SK-N-SH (cell line): ENCODE measurements at regions of chr4 and their contacts with region 1.

Region 1: DNA sequence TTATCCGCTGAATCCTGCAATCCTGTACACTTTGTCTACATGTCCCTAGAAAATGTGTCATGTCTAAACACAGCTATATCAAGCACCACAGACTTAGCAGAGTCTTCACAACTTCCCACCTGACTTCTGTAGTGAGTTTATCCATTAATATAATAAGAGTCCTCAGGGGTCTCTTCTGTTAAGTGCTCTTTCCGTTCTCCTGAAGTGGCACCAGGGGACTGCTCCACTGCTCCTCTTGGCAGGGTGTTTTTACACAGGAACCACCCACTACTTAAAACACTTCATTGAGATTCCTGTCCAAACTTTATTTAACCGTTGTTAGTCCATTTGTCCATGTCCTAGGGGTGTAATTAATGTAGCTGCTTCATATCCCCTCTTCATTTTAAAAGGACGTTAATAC is 1000.4 kb downstream of the STPG2 start:
- DNase-seq: no peak
- H3K4me3 ChIP-seq: no peak overlapping the region
- H3K27ac ChIP-seq: no peak overlapping the region
- H3K4me1 ChIP-seq: peaks cover 0 to 4% of the 10 kb centered on the region in 2 experiments; a peak in 2 of 4 replicates
- H3K27me3 ChIP-seq: no peaks in the 10 kb centered on the region
- CTCF ChIP-seq: no peak
- EP300 ChIP-seq: no peak
- RAD21 ChIP-seq: no peak

Region 2: GRCh38 chr4:97132435-97132834 is 10.5 kb before region 1 on chr4:
- CTCF ChIA-PET with region 1: no interaction called
- POLR2A ChIA-PET with region 1: no interaction called
- DNase-seq: no peak
- H3K4me3 ChIP-seq: no peak overlapping the region
- H3K27ac ChIP-seq: no peak overlapping the region
- H3K4me1 ChIP-seq: no peaks in the 10 kb centered on the region
- H3K27me3 ChIP-seq: no peaks in the 10 kb centered on the region
- CTCF ChIP-seq: no peak
- EP300 ChIP-seq: no peak
- RAD21 ChIP-seq: no peak

Region 3: DNA sequence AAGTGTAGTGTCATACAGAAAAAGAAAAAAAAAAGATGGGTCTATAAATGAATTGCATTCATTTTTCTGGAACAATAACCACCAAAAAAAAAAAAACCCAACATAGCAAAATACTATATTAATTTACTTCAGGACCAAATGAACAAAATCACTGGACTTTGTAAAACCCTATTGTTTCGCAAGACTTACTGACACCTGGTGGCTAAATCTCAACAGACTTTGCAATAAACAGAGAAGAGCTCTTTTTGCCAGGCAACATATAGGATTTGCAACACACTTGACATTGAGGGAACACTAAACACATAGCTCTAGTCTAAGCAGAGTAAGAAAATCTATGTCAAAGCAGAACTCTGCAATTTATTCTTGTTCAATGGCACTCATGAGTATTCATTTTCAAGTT is 10.1 kb after region 1 on chr4:
- CTCF ChIA-PET with region 1: interaction called, 16 read pairs
- POLR2A ChIA-PET with region 1: no interaction called
- DNase-seq: peak; percentile 2
- H3K4me3 ChIP-seq: no peak overlapping the region
- H3K27ac ChIP-seq: no peak overlapping the region
- H3K4me1 ChIP-seq: no peaks in the 10 kb centered on the region
- H3K27me3 ChIP-seq: no peaks in the 10 kb centered on the region
- CTCF ChIP-seq: peak; percentile 47
- EP300 ChIP-seq: no peak
- RAD21 ChIP-seq: peak; percentile 73